ENCODE measurements at regions of chr2 and their contacts with region 1.

Region 1: GRCh38 chr2:11743846-11744553 is 2.4 kb upstream of the LPIN1 start:
- DNase-seq: peak; percentile 77
- ATAC-seq: peak; percentile 62
- H3K4me3 Mint-ChIP-seq: no peak overlapping the region
- H3K27ac Mint-ChIP-seq: peak overlapping the region; percentile 90
- H3K4me1 Mint-ChIP-seq: peaks cover 55% of the 10 kb centered on the region
- H3K27me3 Mint-ChIP-seq: peaks cover 13% of the 10 kb centered on the region
- CTCF ChIP-seq: no peak

Region 2: GRCh38 chr2:11697103-11697871 is 46.7 kb before region 1 on chr2:
- CTCF ChIA-PET with region 1: interaction called, 10 read pairs
- POLR2A ChIA-PET with region 1: no interaction called
- DNase-seq: no peak
- ATAC-seq: peak; percentile 13; the same call in 1 of the 2 replicates
- H3K4me3 Mint-ChIP-seq: no peak overlapping the region
- H3K27ac Mint-ChIP-seq: no peak overlapping the region
- H3K4me1 Mint-ChIP-seq: no peaks in the 10 kb centered on the region
- H3K27me3 Mint-ChIP-seq: no peaks in the 10 kb centered on the region
- CTCF ChIP-seq: no peak

Region 3: GRCh38 chr2:11812466-11813248 is 68.7 kb after region 1 on chr2:
- CTCF ChIA-PET with region 1: no interaction called
- POLR2A ChIA-PET with region 1: no interaction called
- DNase-seq: no peak
- ATAC-seq: no peak
- H3K4me3 Mint-ChIP-seq: no peak overlapping the region
- H3K27ac Mint-ChIP-seq: no peak overlapping the region
- H3K4me1 Mint-ChIP-seq: no peaks in the 10 kb centered on the region
- H3K27me3 Mint-ChIP-seq: no peaks in the 10 kb centered on the region
- CTCF ChIP-seq: no peak

Measured in WTC11 (cell line).